HCT116 (cell line): ENCODE measurements at regions of chr2 and their contacts with region 1.

Region 1: DNA sequence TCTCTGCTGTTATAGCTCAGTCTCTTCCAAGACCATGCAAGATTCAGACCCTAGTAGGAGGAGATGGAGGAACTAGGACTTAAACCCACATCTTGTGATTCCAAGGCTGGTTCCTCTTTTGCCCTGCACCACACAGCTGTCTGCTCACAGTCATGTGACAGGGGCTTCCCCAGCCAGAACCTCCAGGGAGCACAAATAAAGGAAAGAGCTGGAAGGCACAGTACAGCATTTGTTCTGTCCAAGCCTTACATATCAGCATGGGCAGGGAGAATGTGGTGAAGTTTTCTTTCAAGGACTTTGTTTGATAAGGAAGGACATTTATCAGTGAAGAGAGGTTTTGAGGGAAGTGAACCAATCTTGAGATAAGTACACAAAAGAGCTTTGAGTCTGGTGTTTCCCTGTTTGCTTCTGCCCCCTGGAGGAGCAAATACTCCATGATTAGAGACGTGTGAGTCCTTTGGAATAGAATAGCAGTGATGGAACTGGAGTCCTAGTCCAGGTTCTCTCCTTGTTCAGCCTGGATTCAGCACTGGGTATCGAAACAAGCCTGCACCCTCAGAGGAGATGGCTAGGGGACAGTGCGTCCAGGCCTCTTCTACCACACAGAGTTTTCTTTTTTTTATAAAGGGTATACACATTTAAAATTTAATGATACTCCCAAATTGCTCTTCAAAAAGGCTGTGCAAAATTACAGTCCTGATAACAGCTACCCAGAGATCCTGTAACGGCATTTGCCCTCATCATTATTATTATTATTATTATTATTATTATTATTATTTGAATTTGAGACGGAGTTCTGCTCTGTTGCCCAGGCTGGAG is 24.6 kb upstream of the CASP10 start:
- DNase-seq: peak; percentile 61
- ATAC-seq: peak; percentile 96
- H3K4me3 ChIP-seq: no peak overlapping the region
- H3K27ac ChIP-seq: peak overlapping the region; percentile 0; the same call in 1 of the 2 replicates
- H3K4me1 ChIP-seq: peaks cover 0 to 20% of the 10 kb centered on the region in 2 experiments; a peak in 2 of 4 replicates
- H3K27me3 ChIP-seq: no peaks in the 10 kb centered on the region
- CTCF ChIP-seq: peak; percentile 76 to 87 (median 82)
- POLR2A ChIP-seq: no peak
- RAD21 ChIP-seq: peak; percentile 97

Region 2: GRCh38 chr2:200756618-200757321 is 401.6 kb before region 1 on chr2:
- CTCF ChIA-PET with region 1: no interaction called
- POLR2A ChIA-PET with region 1: no interaction called
- RAD21 ChIA-PET with region 1: no interaction called
- intact Hi-C with region 1: no loop called
- DNase-seq: no peak
- ATAC-seq: peak; percentile 90
- H3K4me3 ChIP-seq: peak overlapping the region in 1 of 2 experiments; percentile 17; a peak in 2 of 4 replicates
- H3K27ac ChIP-seq: no peak overlapping the region
- H3K4me1 ChIP-seq: peaks cover 27 to 64% of the 10 kb centered on the region in 2 experiments
- H3K27me3 ChIP-seq: no peaks in the 10 kb centered on the region
- CTCF ChIP-seq: no peak
- POLR2A ChIP-seq: no peak
- RAD21 ChIP-seq: no peak

Region 3: DNA sequence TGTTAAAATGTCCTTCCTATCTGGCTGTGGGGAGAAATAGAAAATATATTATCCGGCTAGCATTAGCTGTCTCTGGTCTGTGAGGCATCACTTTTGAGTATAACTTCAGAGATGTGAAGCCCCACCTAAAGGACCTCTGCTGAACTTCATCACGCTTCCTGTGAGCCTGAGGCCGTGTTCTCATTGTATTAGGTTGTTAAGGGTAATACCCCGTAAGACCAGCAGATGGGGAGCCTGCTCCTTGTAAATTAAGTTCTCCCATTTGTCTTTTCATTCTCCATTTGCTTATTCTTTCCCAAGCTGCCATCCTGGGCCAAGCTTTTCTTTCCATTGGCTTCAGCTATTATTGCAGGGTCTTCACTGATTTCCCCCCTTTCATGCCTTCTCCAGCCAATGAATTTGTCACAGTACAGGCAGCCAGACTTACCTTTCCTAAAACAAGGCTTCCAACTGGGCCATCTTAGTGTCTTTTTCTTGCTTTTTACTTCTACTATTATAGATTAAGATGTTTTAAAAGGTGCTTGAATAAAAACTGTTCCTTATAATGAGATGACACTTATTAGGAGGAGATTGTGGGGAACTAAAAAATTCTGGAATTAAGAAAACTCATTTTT is 256.8 kb before region 1 on chr2:
- CTCF ChIA-PET with region 1: interaction called, 30 read pairs
- POLR2A ChIA-PET with region 1: interaction called, 3 read pairs
- RAD21 ChIA-PET with region 1: interaction called, 4 to 8 read pairs
- intact Hi-C with region 1: loop called (anchors 1 kb)
- DNase-seq: peak; percentile 87
- ATAC-seq: peak; percentile 92
- H3K4me3 ChIP-seq: no peak overlapping the region
- H3K27ac ChIP-seq: no peak overlapping the region
- H3K4me1 ChIP-seq: peaks cover 0 to 5% of the 10 kb centered on the region in 2 experiments; a peak in 1 of 4 replicates
- H3K27me3 ChIP-seq: no peaks in the 10 kb centered on the region
- CTCF ChIP-seq: peak; percentile 73 to 97 (median 85)
- POLR2A ChIP-seq: no peak
- RAD21 ChIP-seq: peak; percentile 89

Region 4: GRCh38 chr2:200944467-200945394 is 213.6 kb before region 1 on chr2:
- CTCF ChIA-PET with region 1: no interaction called
- POLR2A ChIA-PET with region 1: no interaction called
- RAD21 ChIA-PET with region 1: no interaction called
- intact Hi-C with region 1: loop called (anchors 10 kb)
- DNase-seq: peak; percentile 95
- ATAC-seq: peak; percentile 86
- H3K4me3 ChIP-seq: peak overlapping the region in 1 of 2 experiments; percentile 43; a peak in 2 of 4 replicates
- H3K27ac ChIP-seq: peak overlapping the region; percentile 77
- H3K4me1 ChIP-seq: peaks cover 25 to 35% of the 10 kb centered on the region in 2 experiments
- H3K27me3 ChIP-seq: no peaks in the 10 kb centered on the region
- CTCF ChIP-seq: no peak
- POLR2A ChIP-seq: no peak
- RAD21 ChIP-seq: 0 out of 2 replicates have a peak, but pooled peaks have one; percentile 0

Region 5: GRCh38 chr2:200963124-200963917 is 195.0 kb before region 1 on chr2 and contains the start of gene ORC2:
- CTCF ChIA-PET with region 1: no interaction called
- POLR2A ChIA-PET with region 1: no interaction called
- RAD21 ChIA-PET with region 1: no interaction called
- intact Hi-C with region 1: loop called (anchors 2 kb)
- DNase-seq: peak; percentile 94
- ATAC-seq: peak; percentile 93
- H3K4me3 ChIP-seq: peak within 1 kb of the TSS; percentile 56 to 79
- H3K27ac ChIP-seq: peak within 1 kb of the TSS; percentile 93
- H3K4me1 ChIP-seq: peaks cover 12 to 44% of the 10 kb centered on the region in 2 experiments
- H3K27me3 ChIP-seq: no peaks in the 10 kb centered on the region
- CTCF ChIP-seq: peak; percentile 62 to 84 (median 72)
- POLR2A ChIP-seq: peak; percentile 80
- RAD21 ChIP-seq: peak; percentile 47
- total RNA-seq, gene ORC2: 51.9 TPM

Region 6: DNA sequence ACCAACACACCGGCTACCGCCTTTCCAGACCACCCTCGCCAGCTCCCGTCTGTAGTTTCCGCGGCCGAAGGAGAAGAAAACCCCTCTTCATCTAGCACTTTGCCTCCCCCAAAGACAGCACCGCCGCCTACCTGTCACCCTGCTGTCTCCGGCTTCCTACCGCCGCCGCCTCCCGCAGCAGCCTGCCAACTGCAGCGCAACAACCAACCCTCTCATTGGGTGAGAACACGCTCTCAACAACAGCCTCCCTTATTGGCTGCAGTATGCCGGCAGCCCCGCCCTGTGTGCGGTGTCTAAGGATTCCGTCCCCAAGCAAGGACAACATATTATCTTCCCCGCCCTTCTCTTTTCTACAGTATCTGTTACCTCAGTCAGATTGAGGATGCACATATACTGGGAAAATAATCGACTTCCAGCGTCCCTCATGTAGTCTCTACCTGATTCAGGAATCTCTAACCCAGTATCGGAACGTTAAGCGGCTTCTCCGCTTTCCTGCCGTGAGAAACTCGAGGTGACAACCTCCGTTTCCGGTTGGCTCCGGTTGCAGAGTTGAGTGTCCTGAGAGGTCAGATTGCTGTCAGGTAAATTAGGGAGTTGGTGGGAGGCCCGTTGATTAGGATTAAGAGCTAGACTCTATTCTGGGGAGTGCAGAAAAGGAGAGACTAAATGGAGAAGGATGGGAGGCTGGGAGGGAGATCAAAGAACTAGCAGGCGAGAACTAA is 86.7 kb before region 1 on chr2 and contains the starts of genes HYCC2 and NDUFB3:
- CTCF ChIA-PET with region 1: interaction called, 12 read pairs
- POLR2A ChIA-PET with region 1: no interaction called
- RAD21 ChIA-PET with region 1: interaction called in 1 of 2 experiments, 6 read pairs
- intact Hi-C with region 1: loop called (anchors 2 kb)
- DNase-seq: peak; percentile 92
- ATAC-seq: peak; percentile 94
- H3K4me3 ChIP-seq: peak within 1 kb of the TSS; percentile 77 to 93
- H3K27ac ChIP-seq: peak within 1 kb of the TSS; percentile 64
- H3K4me1 ChIP-seq: peaks cover 4 to 18% of the 10 kb centered on the region in 2 experiments; a peak in 3 of 4 replicates
- H3K27me3 ChIP-seq: no peaks in the 10 kb centered on the region
- CTCF ChIP-seq: 0 out of 6 replicates have a peak, but pooled peaks of 2 of the 3 experiments have one; percentile 10 to 11
- POLR2A ChIP-seq: peak; percentile 77
- RAD21 ChIP-seq: no peak
- total RNA-seq, gene HYCC2: 9.9 TPM
- total RNA-seq, gene NDUFB3: 94.6 TPM

Region 7: GRCh38 chr2:201118121-201118960 is 40.0 kb before region 1 on chr2:
- CTCF ChIA-PET with region 1: interaction called, 30 read pairs
- POLR2A ChIA-PET with region 1: interaction called, 3 read pairs
- RAD21 ChIA-PET with region 1: interaction called, 4 to 6 read pairs
- intact Hi-C with region 1: no loop called
- DNase-seq: peak; percentile 86
- ATAC-seq: peak; percentile 66
- H3K4me3 ChIP-seq: peak overlapping the region; percentile 81
- H3K27ac ChIP-seq: peak overlapping the region; percentile 96
- H3K4me1 ChIP-seq: peaks cover 18 to 75% of the 10 kb centered on the region in 2 experiments
- H3K27me3 ChIP-seq: no peaks in the 10 kb centered on the region
- CTCF ChIP-seq: peak; percentile 50 to 93 (median 57); a peak in 5 of 6 replicates
- POLR2A ChIP-seq: no peak
- RAD21 ChIP-seq: peak; percentile 70